HCT116 (cell line): ENCODE measurements at regions of chr18 and their contacts with region 1.

Region 1: GRCh38 chr18:42298759-42299675 is 344.0 kb downstream of the PIK3C3 start:
- DNase-seq: peak; percentile 12
- ATAC-seq: peak; percentile 66
- H3K4me3 ChIP-seq: no peak overlapping the region
- H3K27ac ChIP-seq: no peak overlapping the region
- H3K4me1 ChIP-seq: no peaks in the 10 kb centered on the region
- H3K27me3 ChIP-seq: no peaks in the 10 kb centered on the region
- CTCF ChIP-seq: peak in 2 of 3 experiments; percentile 62 to 81; a peak in 4 of 6 replicates
- POLR2A ChIP-seq: no peak
- RAD21 ChIP-seq: peak; percentile 26

Region 2: GRCh38 chr18:42287047-42287446 is 12.0 kb before region 1 on chr18:
- CTCF ChIA-PET with region 1: no interaction called
- POLR2A ChIA-PET with region 1: no interaction called
- RAD21 ChIA-PET with region 1: no interaction called
- intact Hi-C with region 1: no loop called
- DNase-seq: no peak
- ATAC-seq: no peak
- H3K4me3 ChIP-seq: no peak overlapping the region
- H3K27ac ChIP-seq: no peak overlapping the region
- H3K4me1 ChIP-seq: no peaks in the 10 kb centered on the region
- H3K27me3 ChIP-seq: no peaks in the 10 kb centered on the region
- CTCF ChIP-seq: no peak
- POLR2A ChIP-seq: no peak
- RAD21 ChIP-seq: no peak

Region 3: DNA sequence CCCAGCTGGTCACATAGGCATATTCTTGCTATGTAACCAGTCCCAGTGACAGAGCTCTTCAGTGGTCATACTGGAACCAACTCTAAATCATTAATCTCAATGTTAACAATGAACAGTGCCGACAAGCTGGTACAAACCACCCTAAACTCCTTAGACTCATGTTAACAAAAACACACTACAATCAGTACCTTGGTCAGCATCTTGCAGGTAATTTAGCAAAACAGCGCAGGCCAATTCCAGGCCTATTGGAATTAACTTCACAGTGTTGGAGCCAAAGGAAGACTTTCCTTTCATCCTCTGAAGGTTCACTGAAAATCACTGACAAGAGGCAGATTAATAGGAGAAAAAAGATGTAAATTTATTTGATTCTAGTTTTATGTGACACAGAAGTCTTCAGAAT is 52.4 kb after region 1 on chr18:
- CTCF ChIA-PET with region 1: no interaction called
- POLR2A ChIA-PET with region 1: no interaction called
- RAD21 ChIA-PET with region 1: no interaction called
- intact Hi-C with region 1: no loop called
- DNase-seq: no peak
- ATAC-seq: no peak
- H3K4me3 ChIP-seq: no peak overlapping the region
- H3K27ac ChIP-seq: no peak overlapping the region
- H3K4me1 ChIP-seq: no peaks in the 10 kb centered on the region
- H3K27me3 ChIP-seq: no peaks in the 10 kb centered on the region
- CTCF ChIP-seq: no peak
- POLR2A ChIP-seq: no peak
- RAD21 ChIP-seq: no peak

Region 4: DNA sequence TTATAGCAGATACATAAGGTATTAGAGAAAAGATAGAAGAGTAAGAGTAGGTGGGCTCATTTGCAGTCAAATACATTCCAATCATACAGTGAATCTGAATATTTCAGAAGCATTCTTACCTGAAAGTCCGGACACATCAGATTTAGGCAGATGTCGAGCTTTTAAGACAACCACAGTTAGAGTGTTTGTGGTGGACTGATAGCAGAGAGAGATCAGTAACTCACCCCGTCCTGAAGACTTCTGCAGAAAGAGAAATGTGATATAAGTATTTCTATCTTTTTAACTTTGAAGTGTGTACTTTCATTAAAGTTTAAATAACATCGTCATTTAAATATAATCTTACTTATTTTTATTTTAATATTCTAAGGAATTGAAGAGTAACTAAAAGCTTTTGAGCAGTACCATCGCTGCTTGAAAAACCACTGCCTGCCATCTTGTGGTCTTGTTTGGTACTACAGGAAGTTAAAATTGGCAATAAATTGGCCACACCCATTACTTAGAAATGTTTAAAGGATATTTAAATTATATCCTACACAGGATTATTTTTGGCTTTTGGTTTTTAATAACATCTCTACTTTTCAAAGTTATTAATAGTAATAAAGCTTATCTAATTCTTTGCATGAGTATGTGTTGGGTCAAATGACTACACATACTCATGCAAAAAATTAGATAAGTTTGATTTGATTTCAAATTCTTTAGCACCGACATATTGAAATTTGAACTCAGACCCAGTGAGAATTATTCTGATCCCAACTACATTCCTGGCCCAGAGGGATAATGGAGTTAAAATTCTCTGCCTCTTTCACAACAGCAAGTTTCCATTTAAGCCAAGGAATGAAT is 972.8 kb after region 1 on chr18:
- CTCF ChIA-PET with region 1: no interaction called
- POLR2A ChIA-PET with region 1: no interaction called
- RAD21 ChIA-PET with region 1: no interaction called
- intact Hi-C with region 1: loop called (anchors 2 kb)
- DNase-seq: peak; percentile 19
- ATAC-seq: no peak
- H3K4me3 ChIP-seq: no peak overlapping the region
- H3K27ac ChIP-seq: no peak overlapping the region
- H3K4me1 ChIP-seq: no peaks in the 10 kb centered on the region
- H3K27me3 ChIP-seq: no peaks in the 10 kb centered on the region
- CTCF ChIP-seq: peak in 2 of 3 experiments; percentile 52 to 54; a peak in 3 of 6 replicates
- POLR2A ChIP-seq: no peak
- RAD21 ChIP-seq: peak; percentile 30

Region 5: DNA sequence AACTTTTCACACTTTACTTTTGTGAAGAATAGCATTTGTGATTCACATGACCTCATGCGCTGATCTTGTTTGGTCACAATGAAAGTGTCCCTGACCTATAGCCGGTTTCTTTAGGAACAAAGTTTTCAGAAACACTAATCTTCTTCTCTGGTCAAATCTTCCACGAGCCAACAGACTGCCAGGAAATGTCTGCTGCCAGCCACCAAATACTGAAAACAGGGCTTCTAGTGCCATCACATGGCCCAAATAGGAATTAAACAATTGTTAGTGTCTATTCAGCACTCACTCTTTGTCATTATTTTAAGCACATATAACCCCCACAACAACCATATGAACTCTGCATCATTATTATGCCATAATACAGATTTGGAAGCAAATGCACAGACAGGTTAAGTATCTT is 1264.8 kb after region 1 on chr18:
- CTCF ChIA-PET with region 1: no interaction called
- POLR2A ChIA-PET with region 1: no interaction called
- RAD21 ChIA-PET with region 1: no interaction called
- intact Hi-C with region 1: loop called (anchors 5 kb)
- DNase-seq: no peak
- ATAC-seq: no peak
- H3K4me3 ChIP-seq: no peak overlapping the region
- H3K27ac ChIP-seq: no peak overlapping the region
- H3K4me1 ChIP-seq: no peaks in the 10 kb centered on the region
- H3K27me3 ChIP-seq: no peaks in the 10 kb centered on the region
- CTCF ChIP-seq: peak in 1 of 3 experiments; percentile 25; a peak in 2 of 6 replicates
- POLR2A ChIP-seq: no peak
- RAD21 ChIP-seq: 0 out of 2 replicates have a peak, but pooled peaks have one; percentile 6

Region 6: DNA sequence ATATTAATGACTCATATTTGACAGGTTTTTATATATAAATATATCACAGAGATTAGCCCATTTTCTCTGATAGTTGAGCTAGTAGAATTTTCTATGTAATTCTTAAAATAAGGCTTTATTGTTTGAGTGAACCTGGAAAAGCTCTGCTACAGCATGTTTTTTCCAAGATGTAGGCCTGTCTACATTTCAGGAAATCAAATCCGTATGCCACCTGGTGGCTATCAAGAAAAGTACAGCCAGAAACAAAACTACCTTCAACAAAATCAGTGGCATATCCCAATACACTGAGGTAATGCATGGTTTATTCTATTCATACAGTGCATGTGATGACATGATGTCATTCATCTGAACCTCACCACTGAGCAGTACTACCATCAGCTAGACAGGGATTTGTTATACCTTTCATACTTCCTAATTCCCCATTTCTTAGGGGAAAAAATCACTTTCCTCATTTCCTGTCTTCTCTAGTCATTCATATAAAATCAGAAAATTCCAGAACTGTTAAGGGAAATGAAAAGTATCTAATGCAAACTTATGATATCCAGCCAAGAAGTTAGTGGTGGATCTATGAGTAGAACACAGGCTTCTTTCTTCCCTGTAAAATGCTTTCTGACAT is 1288.6 kb after region 1 on chr18:
- CTCF ChIA-PET with region 1: no interaction called
- POLR2A ChIA-PET with region 1: no interaction called
- RAD21 ChIA-PET with region 1: no interaction called
- intact Hi-C with region 1: loop called (anchors 5 kb)
- DNase-seq: no peak
- ATAC-seq: no peak
- H3K4me3 ChIP-seq: no peak overlapping the region
- H3K27ac ChIP-seq: no peak overlapping the region
- H3K4me1 ChIP-seq: no peaks in the 10 kb centered on the region
- H3K27me3 ChIP-seq: no peaks in the 10 kb centered on the region
- CTCF ChIP-seq: peak in 2 of 3 experiments; percentile 49 to 58; a peak in 4 of 6 replicates
- POLR2A ChIP-seq: no peak
- RAD21 ChIP-seq: no peak